ENCODE measurements at regions of chr1 and their contacts with region 1.

Region 1: DNA sequence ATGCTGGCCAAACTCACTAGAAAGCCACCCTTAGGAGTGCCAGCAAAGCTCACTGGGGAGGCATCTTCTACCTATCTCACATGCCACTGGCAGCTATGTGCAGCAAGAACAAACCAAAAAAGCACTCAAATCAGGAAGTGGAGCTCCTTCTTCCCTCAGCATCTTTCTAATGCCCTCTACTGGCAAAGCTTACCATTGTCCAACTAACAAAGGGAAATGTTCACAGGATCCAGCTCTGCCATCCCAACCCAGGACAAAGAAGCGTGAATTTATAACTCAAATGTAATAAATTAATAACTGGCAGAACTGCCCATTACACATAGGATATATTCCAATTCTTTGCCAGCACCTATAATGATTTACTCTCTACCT is 38.9 kb downstream of the LEPR start:
- DNase-seq: no peak
- ATAC-seq: no peak
- H3K4me3 Mint-ChIP-seq: no peak overlapping the region
- H3K27ac Mint-ChIP-seq: no peak overlapping the region
- H3K4me1 Mint-ChIP-seq: peaks cover 23% of the 10 kb centered on the region
- H3K27me3 Mint-ChIP-seq: no peaks in the 10 kb centered on the region
- CTCF ChIP-seq: peak; percentile 50

Region 2: DNA sequence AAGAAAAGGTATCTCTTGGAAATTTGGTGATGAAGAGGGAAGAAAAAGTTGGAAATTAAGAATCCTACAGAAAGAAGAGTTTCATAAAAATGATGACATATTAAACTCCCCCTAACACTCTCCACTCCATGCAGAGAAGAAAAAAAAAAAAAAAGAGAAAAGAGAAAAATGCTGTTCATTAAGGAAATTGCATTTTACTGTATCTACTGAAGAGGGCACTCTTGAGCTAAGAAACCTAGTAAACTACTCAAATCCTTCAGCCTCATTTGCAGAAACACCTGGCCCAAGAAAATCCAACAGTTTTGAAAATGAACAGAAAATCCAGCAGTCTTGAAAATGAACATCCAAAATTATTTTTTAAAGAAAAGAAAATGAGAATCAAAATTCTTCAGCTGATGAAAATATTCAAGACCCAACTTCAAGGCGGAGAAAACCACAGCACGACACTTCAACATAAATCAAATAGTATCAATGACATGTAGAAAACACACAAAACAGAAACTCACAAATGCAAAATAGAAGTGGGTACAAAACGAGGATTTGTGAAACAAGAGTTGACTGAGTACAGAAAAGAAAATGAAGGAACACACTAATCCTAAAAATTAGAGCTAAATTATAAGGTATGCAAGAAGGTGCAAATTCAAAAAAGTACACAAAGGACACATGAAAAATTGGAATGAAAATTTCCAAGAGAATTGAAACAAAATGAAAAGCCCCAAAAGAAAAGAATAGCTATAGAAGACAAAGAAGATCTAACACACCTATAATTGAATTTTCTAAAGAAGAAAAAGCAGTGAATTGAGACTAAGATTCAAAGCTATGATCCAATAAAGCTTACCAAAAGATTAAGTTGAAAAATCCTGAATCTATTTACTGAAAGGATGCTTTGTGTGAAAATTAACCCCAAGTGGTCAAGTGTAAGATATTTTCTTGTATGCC is 223.2 kb before region 1 on chr1:
- CTCF ChIA-PET with region 1: interaction called, 23 read pairs
- POLR2A ChIA-PET with region 1: no interaction called
- intact Hi-C with region 1: no loop called
- DNase-seq: no peak
- ATAC-seq: no peak
- H3K4me3 Mint-ChIP-seq: no peak overlapping the region
- H3K27ac Mint-ChIP-seq: no peak overlapping the region
- H3K4me1 Mint-ChIP-seq: peaks cover 9% of the 10 kb centered on the region
- H3K27me3 Mint-ChIP-seq: peaks cover 13% of the 10 kb centered on the region
- CTCF ChIP-seq: peak; percentile 78

Region 3: DNA sequence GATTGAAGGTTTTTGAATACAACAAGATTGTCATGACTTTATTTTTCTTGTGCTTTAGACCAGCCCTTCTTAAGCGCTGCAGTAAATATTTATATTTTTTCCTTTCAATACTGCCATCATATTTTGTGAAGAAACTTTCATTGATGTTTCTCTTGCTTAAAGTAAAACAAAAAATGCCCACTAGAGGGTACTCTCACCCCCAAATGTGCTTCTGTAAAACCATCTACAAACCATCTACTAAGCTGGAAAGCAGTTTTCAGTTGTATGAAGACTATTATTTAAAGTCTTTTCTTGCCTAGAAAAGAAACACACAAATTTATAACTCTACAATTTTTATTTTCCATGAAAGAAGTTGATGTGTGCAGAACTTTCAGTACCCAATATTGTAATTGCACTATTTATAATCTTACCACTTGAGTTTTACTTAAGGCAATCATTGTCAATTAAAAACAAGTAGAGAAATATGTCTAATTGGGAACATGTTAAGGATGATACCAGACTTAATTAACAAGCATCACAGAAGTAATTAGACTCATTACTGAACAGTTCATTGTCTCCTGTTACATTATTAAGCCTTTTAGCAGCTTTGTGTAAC is 28.2 kb before region 1 on chr1:
- CTCF ChIA-PET with region 1: interaction called, 18 read pairs
- POLR2A ChIA-PET with region 1: no interaction called
- intact Hi-C with region 1: no loop called
- DNase-seq: no peak
- ATAC-seq: peak; percentile 34
- H3K4me3 Mint-ChIP-seq: no peak overlapping the region
- H3K27ac Mint-ChIP-seq: no peak overlapping the region
- H3K4me1 Mint-ChIP-seq: peaks cover 4% of the 10 kb centered on the region
- H3K27me3 Mint-ChIP-seq: no peaks in the 10 kb centered on the region
- CTCF ChIP-seq: peak; percentile 63

Region 4: DNA sequence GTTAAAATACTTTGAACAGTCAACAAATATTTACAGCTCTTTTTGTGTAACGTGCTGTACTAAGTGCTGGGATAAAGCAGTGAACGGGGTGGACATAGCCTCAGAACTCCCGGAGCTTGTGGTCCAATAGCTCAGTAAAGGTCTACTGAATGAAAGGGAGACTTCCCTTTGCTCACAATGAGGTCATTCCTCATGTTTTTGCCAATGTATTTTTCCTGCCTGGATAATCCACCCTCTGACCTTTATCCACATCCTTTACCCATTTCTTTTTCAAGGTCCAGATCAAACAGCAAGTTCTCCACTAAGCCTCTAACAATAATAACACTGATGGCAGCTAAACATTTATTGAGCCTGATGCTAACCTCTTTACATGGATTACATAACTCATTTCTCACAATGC is 16.9 kb after region 1 on chr1:
- CTCF ChIA-PET with region 1: interaction called, 10 read pairs
- POLR2A ChIA-PET with region 1: no interaction called
- intact Hi-C with region 1: no loop called
- DNase-seq: no peak
- ATAC-seq: no peak
- H3K4me3 Mint-ChIP-seq: no peak overlapping the region
- H3K27ac Mint-ChIP-seq: no peak overlapping the region
- H3K4me1 Mint-ChIP-seq: no peaks in the 10 kb centered on the region
- H3K27me3 Mint-ChIP-seq: no peaks in the 10 kb centered on the region
- CTCF ChIP-seq: no peak

Measured in activated CD8-positive, alpha-beta T cell treated with anti-CD3 and anti-CD28 coated beads for 36 hours (primary cell).